ENCODE measurements at regions of chr11 and their contacts with region 1.

Region 1: GRCh38 chr11:12043959-12044819 is 35.8 kb upstream of the DKK3 start:
- DNase-seq: peak in 5 of 6 donors; percentile 60 to 83 (median 73)
- ATAC-seq: peak; percentile 85 to 91 (median 90)
- H3K4me3 ChIP-seq: no peak overlapping the region
- H3K27ac ChIP-seq: peak overlapping the region in 2 of 4 donors; percentile 37 to 39
- H3K4me1 ChIP-seq: peaks cover 4 to 12% (median 5%) of the 10 kb centered on the region in 3 donors
- H3K27me3 ChIP-seq: no peaks in the 10 kb centered on the region
- CTCF ChIP-seq: peak; percentile 86 to 92 (median 90)

Region 2: DNA sequence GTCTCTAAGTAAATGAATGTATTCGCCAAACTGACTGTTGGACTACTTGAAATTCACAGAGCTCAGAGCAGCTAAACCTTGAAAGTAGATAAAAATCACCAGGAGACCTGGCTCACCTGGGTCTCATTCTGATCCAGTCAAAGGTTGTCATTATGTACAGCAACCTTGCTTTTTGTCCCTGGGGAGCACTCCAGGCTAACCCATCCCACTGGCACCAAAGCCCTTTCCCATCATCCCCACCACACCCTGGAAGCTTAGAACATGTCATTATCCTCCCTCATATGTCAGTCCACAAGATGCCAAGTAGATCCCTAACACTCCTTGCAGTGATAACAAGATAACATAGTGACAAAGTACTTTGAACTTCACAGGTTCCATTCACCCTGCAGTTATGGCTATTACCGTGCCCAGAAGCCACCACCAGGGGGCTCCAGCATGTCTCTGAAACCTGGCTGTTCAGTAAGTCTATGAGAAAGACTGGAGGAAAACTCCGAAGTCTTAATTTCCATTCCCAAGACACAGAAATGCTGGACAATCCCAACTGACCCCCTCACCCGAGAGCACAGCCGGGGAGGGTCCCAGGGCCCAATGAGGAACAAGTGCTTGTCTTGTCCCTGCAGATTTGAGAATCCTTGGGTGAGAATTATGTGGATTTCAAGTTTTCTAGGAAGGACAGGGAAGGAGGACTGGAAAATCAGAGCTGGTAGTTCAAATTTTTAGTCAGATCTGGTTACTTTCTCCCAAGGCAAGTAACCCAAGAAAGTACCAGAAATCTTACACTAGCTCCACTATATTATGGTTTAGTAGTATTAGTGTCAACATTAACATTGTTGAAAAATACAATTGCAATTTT is 245.4 kb before region 1 on chr11:
- intact Hi-C with region 1: loop called in 1 of 3 experiments (anchors 10 kb)
- DNase-seq: peak; percentile 33 to 88 (median 84)
- ATAC-seq: peak; percentile 82 to 100 (median 98)
- H3K4me3 ChIP-seq: no peak overlapping the region
- H3K27ac ChIP-seq: no peak overlapping the region
- H3K4me1 ChIP-seq: no peaks in the 10 kb centered on the region
- H3K27me3 ChIP-seq: no peaks in the 10 kb centered on the region
- CTCF ChIP-seq: peak; percentile 56 to 92 (median 86)

Region 3: GRCh38 chr11:11931461-11932055 is 112.6 kb before region 1 on chr11:
- intact Hi-C with region 1: loop called in 2 of 3 experiments (anchors 5 to 10 kb)
- DNase-seq: no peak
- ATAC-seq: peak in 3 of 4 donors; percentile 71 to 81 (median 75)
- H3K4me3 ChIP-seq: no peak overlapping the region
- H3K27ac ChIP-seq: no peak overlapping the region
- H3K4me1 ChIP-seq: no peaks in the 10 kb centered on the region
- H3K27me3 ChIP-seq: no peaks in the 10 kb centered on the region
- CTCF ChIP-seq: peak; percentile 9 to 45 (median 32)

Region 4: GRCh38 chr11:11937957-11938356 is 106.2 kb before region 1 on chr11:
- intact Hi-C with region 1: loop called in 2 of 3 experiments (anchors 5 to 10 kb)
- DNase-seq: no peak
- ATAC-seq: no peak
- H3K4me3 ChIP-seq: no peak overlapping the region
- H3K27ac ChIP-seq: no peak overlapping the region
- H3K4me1 ChIP-seq: no peaks in the 10 kb centered on the region
- H3K27me3 ChIP-seq: no peaks in the 10 kb centered on the region
- CTCF ChIP-seq: no peak

Region 5: GRCh38 chr11:11993839-11994238 is 50.4 kb before region 1 on chr11:
- intact Hi-C with region 1: no loop called
- DNase-seq: no peak
- ATAC-seq: no peak
- H3K4me3 ChIP-seq: no peak overlapping the region
- H3K27ac ChIP-seq: no peak overlapping the region
- H3K4me1 ChIP-seq: no peaks in the 10 kb centered on the region
- H3K27me3 ChIP-seq: no peaks in the 10 kb centered on the region
- CTCF ChIP-seq: no peak